Colonic mucosa (tissue), 4 donors: ENCODE measurements at regions of chr12 and their contacts with region 1.

Region 1: GRCh38 chr12:89524541-89525285 is at the start of gene GALNT4:
- DNase-seq: peak; percentile 96
- H3K4me3 ChIP-seq: peak within 1 kb of the TSS; percentile 92
- H3K27ac ChIP-seq: peak within 1 kb of the TSS; percentile 96
- H3K4me1 ChIP-seq: peaks cover 7% of the 10 kb centered on the region
- H3K27me3 ChIP-seq: no peaks in the 10 kb centered on the region
- CTCF ChIP-seq: peak; percentile 73
- total RNA-seq, gene GALNT4: 37.2 to 54.4 TPM

Region 2: GRCh38 chr12:88566171-88566829 is 958.4 kb before region 1 on chr12:
- intact Hi-C with region 1: loop called (anchors 10 kb)
- DNase-seq: peak; percentile 59
- H3K4me3 ChIP-seq: no peak overlapping the region
- H3K27ac ChIP-seq: peak overlapping the region; percentile 13
- H3K4me1 ChIP-seq: peaks cover 11% of the 10 kb centered on the region
- H3K27me3 ChIP-seq: no peaks in the 10 kb centered on the region
- CTCF ChIP-seq: no peak

Region 3: GRCh38 chr12:89040146-89040964 is 484.4 kb before region 1 on chr12:
- intact Hi-C with region 1: loop called (anchors 10 kb)
- DNase-seq: no peak
- H3K4me3 ChIP-seq: no peak overlapping the region
- H3K27ac ChIP-seq: no peak overlapping the region
- H3K4me1 ChIP-seq: no peaks in the 10 kb centered on the region
- H3K27me3 ChIP-seq: no peaks in the 10 kb centered on the region
- CTCF ChIP-seq: no peak

Region 4: GRCh38 chr12:89352492-89353187 is 172.1 kb before region 1 on chr12 and contains the start of gene DUSP6:
- intact Hi-C with region 1: loop called (anchors 10 kb)
- DNase-seq: peak; percentile 98
- H3K4me3 ChIP-seq: peak within 1 kb of the TSS; percentile 70
- H3K27ac ChIP-seq: peak within 1 kb of the TSS; percentile 99
- H3K4me1 ChIP-seq: peaks cover 12% of the 10 kb centered on the region
- H3K27me3 ChIP-seq: no peaks in the 10 kb centered on the region
- CTCF ChIP-seq: no peak
- total RNA-seq, gene DUSP6: 53.8 to 97.6 TPM

Region 5: GRCh38 chr12:89389755-89390661 is 134.7 kb before region 1 on chr12:
- intact Hi-C with region 1: no loop called
- DNase-seq: peak; percentile 47
- H3K4me3 ChIP-seq: no peak overlapping the region
- H3K27ac ChIP-seq: peak overlapping the region; percentile 68
- H3K4me1 ChIP-seq: peaks cover 12% of the 10 kb centered on the region
- H3K27me3 ChIP-seq: no peaks in the 10 kb centered on the region
- CTCF ChIP-seq: no peak

Region 6: GRCh38 chr12:89470741-89471509 is 53.8 kb before region 1 on chr12:
- intact Hi-C with region 1: loop called (anchors 2 kb)
- DNase-seq: no peak
- H3K4me3 ChIP-seq: no peak overlapping the region
- H3K27ac ChIP-seq: no peak overlapping the region
- H3K4me1 ChIP-seq: no peaks in the 10 kb centered on the region
- H3K27me3 ChIP-seq: no peaks in the 10 kb centered on the region
- CTCF ChIP-seq: peak; percentile 62

Region 7: DNA sequence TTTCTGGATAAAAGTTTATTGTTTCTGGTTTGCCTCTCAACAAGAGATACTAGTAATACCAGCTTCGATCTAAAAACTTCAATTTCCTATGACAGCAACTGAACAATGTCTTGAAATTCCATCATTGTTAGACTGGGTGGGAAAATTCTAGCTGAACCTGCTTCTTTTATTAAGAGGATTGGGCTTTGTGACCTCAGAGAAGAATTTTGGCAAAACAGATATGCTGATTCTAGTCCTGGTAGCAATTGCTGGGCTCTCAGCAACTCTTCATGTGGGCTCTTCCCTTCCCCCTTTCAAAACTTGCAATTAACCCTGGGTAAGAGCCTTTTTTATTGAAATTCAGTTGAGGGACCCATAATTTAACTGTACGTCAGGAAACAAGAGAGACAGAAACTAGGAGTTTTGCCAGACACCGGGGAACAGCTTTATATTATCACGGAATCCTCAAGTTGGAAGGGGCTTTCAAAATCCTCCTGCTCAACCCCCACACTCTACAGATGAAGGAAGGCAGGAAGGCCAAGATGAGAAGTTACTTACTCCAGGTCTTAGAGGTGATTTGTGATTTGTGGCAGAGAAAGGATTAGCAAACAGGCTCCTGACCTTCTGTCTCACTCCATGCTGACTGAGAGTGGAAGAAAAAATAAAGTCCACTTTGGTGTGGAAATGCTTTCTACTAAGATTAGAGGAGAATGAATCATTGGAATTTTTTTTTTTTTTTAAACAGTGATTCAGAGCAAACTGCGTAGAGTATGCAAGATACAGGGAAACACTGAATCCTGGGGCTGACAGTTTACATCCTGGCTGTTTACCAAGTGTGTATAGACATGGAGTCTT is 422.9 kb after region 1 on chr12:
- intact Hi-C with region 1: no loop called
- DNase-seq: no peak
- H3K4me3 ChIP-seq: no peak overlapping the region
- H3K27ac ChIP-seq: peak overlapping the region; percentile 67
- H3K4me1 ChIP-seq: peaks cover 23% of the 10 kb centered on the region
- H3K27me3 ChIP-seq: no peaks in the 10 kb centered on the region
- CTCF ChIP-seq: no peak